SK-N-SH (cell line): ENCODE measurements at regions of chr5 and their contacts with region 1.

Region 1: GRCh38 chr5:10283927-10284635 is 23.6 kb downstream of the CMBL start:
- DNase-seq: peak; percentile 85
- H3K4me3 ChIP-seq: peak overlapping the region in 1 of 2 experiments; percentile 31; a peak in 1 of 4 replicates
- H3K27ac ChIP-seq: no peak overlapping the region
- H3K4me1 ChIP-seq: peaks cover 0 to 6% of the 10 kb centered on the region in 2 experiments; a peak in 1 of 4 replicates
- H3K27me3 ChIP-seq: no peaks in the 10 kb centered on the region
- CTCF ChIP-seq: peak; percentile 89
- EP300 ChIP-seq: no peak
- RAD21 ChIP-seq: peak; percentile 84

Region 2: GRCh38 chr5:10295619-10296326 is 11.7 kb after region 1 on chr5:
- CTCF ChIA-PET with region 1: interaction called, 12 read pairs
- POLR2A ChIA-PET with region 1: no interaction called
- DNase-seq: no peak
- H3K4me3 ChIP-seq: no peak overlapping the region
- H3K27ac ChIP-seq: no peak overlapping the region
- H3K4me1 ChIP-seq: no peaks in the 10 kb centered on the region
- H3K27me3 ChIP-seq: no peaks in the 10 kb centered on the region
- CTCF ChIP-seq: no peak
- EP300 ChIP-seq: no peak
- RAD21 ChIP-seq: no peak

Region 3: DNA sequence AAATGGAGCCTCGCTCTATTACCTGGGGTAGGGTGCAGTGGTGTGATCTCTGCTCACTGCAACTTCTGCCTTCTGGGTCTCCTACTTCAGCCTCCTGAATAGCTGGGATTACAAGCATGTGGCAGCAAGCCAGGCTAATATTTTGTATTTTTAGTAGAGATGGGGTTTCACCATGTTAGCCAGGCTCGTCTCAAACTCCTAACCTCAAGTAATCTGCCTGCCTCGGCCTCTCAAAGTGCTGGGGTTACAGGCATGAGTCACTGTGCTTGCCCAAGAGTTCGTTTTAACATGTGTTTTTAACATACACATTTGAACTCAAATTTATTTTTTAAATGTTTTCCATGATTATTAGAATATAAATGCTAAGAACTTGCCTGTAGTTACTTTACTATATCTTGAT is 103.6 kb after region 1 on chr5:
- CTCF ChIA-PET with region 1: interaction called, 15 read pairs
- POLR2A ChIA-PET with region 1: no interaction called
- DNase-seq: no peak
- H3K4me3 ChIP-seq: no peak overlapping the region
- H3K27ac ChIP-seq: no peak overlapping the region
- H3K4me1 ChIP-seq: no peaks in the 10 kb centered on the region
- H3K27me3 ChIP-seq: no peaks in the 10 kb centered on the region
- CTCF ChIP-seq: no peak
- EP300 ChIP-seq: no peak
- RAD21 ChIP-seq: no peak

Region 4: DNA sequence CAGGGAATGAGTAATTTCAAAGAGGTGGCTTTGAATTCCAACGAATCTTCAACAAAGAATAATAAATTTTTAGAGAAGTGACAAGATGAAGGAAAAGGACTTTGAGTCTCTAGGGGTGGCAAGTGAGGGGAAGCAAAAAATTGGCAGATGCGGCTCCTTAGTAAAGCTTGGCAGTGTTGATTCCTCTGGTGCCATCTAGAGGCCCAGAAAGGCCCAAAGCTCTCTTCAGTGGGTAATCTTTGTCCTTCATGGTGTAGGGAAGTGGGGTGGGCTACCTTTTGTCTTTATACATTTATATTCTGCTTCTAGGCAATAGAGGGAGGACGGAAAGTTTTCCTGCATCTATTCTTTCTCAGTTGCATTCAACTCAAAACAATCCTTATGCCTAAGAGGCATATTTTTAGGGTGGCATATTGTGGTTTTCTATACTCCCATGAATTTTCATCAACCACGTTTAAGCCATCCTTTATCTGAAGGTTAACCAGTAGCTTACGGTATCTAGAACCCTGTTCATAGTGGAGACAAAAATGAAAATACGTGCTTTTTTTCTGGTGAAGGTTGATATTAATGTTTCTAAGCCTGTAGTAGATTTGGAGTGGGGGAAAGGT is 140.1 kb after region 1 on chr5:
- CTCF ChIA-PET with region 1: interaction called, 51 read pairs
- POLR2A ChIA-PET with region 1: no interaction called
- DNase-seq: peak; percentile 43
- H3K4me3 ChIP-seq: no peak overlapping the region
- H3K27ac ChIP-seq: no peak overlapping the region; a peak in 1 of 4 replicates
- H3K4me1 ChIP-seq: peaks cover 14 to 23% of the 10 kb centered on the region in 2 experiments; a peak in 3 of 4 replicates
- H3K27me3 ChIP-seq: no peaks in the 10 kb centered on the region
- CTCF ChIP-seq: peak; percentile 70
- EP300 ChIP-seq: no peak
- RAD21 ChIP-seq: peak; percentile 75